Adrenal gland (tissue), 19 donors: ENCODE measurements at regions of chr15 and their contacts with region 1.

Region 1: DNA sequence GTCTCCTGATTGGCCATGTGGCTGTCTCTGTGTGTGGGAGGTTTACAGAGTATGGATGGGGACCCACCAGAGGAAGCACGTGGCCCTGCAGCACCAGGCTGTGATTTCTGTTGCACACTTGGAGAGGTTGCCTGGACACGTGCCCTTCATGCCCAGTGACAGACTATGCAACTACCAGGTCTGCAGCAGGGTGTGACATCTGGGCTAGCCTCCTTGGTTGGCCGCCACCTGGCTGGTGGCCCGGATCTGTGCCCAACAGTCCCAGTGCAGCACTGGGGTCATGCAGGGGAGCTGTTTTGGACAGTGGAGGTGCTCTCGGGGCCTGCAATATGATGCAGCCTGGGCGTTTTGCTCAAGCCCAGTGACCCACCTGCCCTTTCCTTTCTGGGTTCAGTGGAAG is 212.5 kb downstream of the UBE3A start:
- DNase-seq: no peak
- H3K4me3 ChIP-seq: no peak overlapping the region
- H3K27ac ChIP-seq: no peak overlapping the region
- H3K4me1 ChIP-seq: no peaks in the 10 kb centered on the region
- H3K27me3 ChIP-seq: no peaks in the 10 kb centered on the region
- CTCF ChIP-seq: no peak
- POLR2A ChIP-seq: no peak

Region 2: GRCh38 chr15:25184356-25185155 is 41.8 kb before region 1 on chr15:
- intact Hi-C with region 1: loop called in 1 of 2 experiments (anchors 5 kb)
- DNase-seq: peak in 1 of 7 donors; percentile 2
- H3K4me3 ChIP-seq: no peak overlapping the region
- H3K27ac ChIP-seq: no peak overlapping the region
- H3K4me1 ChIP-seq: no peaks in the 10 kb centered on the region
- H3K27me3 ChIP-seq: no peaks in the 10 kb centered on the region
- CTCF ChIP-seq: no peak
- POLR2A ChIP-seq: no peak